GM12878 (cell line): ENCODE measurements at regions of chr10 and their contacts with region 1.

Region 1: GRCh38 chr10:60646966-60647796 is 131.1 kb upstream of the CDK1 start:
- DNase-seq: peak; percentile 17
- ATAC-seq: peak; percentile 78
- H3K4me3 ChIP-seq: no peak overlapping the region
- H3K27ac ChIP-seq: no peak overlapping the region
- H3K4me1 ChIP-seq: no peaks in the 10 kb centered on the region
- H3K27me3 ChIP-seq: no peaks in the 10 kb centered on the region
- CTCF ChIP-seq: peak; percentile 59 to 72 (median 59)
- EP300 ChIP-seq: no peak
- POLR2A ChIP-seq: no peak
- RAD21 ChIP-seq: peak; percentile 77

Region 2: DNA sequence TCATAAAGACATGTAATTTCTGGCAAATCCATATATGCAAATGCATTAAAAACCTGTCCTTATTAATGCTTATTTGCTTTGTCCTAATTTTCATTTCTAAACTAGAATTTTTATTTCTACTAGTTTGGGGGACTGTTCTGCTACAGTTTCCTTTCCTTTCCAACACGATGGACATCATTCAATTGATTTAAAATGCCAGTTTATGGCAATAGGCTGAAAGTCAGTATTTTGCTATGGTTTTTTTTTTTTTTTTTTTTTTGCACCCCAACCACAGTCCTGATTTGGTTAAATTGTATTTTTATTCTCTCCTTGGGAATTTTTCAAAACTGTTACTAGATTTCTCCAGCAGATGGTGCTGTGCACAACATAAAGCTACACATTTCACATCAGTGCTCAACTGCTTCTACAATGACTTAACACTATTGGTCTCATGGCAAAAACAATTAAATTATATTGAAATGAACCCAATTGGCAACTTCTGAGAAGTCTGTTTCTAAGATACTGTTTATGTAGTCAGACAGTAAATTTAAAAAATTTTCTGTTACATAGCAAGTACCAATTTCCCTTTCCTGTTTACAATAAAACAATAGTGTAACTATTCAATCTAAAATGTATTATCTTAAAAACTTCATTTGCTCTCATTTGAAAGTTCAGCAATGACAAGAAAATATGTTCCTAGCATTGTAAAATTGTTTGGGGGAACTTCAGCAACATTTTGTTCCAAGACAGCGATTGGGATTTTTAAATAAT is 547.0 kb before region 1 on chr10:
- CTCF ChIA-PET with region 1: interaction called, 5 read pairs
- POLR2A ChIA-PET with region 1: no interaction called
- RAD21 ChIA-PET with region 1: no interaction called
- SMC1A ChIA-PET with region 1: interaction called, 6 read pairs
- in situ Hi-C with region 1: loop called (anchors 5 kb)
- intact Hi-C with region 1: loop called (anchors 2 kb)
- DNase-seq: no peak
- ATAC-seq: peak; percentile 73
- H3K4me3 ChIP-seq: no peak overlapping the region
- H3K27ac ChIP-seq: no peak overlapping the region
- H3K4me1 ChIP-seq: peaks cover 9% of the 10 kb centered on the region
- H3K27me3 ChIP-seq: no peaks in the 10 kb centered on the region
- CTCF ChIP-seq: peak; percentile 51 to 55 (median 54); a peak in 5 of 6 replicates
- EP300 ChIP-seq: no peak
- POLR2A ChIP-seq: no peak
- RAD21 ChIP-seq: peak; percentile 66

Region 3: GRCh38 chr10:60444494-60445064 is 202.6 kb before region 1 on chr10:
- CTCF ChIA-PET with region 1: interaction called, 32 read pairs
- POLR2A ChIA-PET with region 1: no interaction called
- RAD21 ChIA-PET with region 1: interaction called, 8 read pairs
- SMC1A ChIA-PET with region 1: interaction called, 8 read pairs
- in situ Hi-C with region 1: loop called (anchors 5 kb)
- intact Hi-C with region 1: loop called (anchors 1 kb)
- DNase-seq: no peak
- ATAC-seq: no peak
- H3K4me3 ChIP-seq: no peak overlapping the region
- H3K27ac ChIP-seq: no peak overlapping the region
- H3K4me1 ChIP-seq: no peaks in the 10 kb centered on the region
- H3K27me3 ChIP-seq: no peaks in the 10 kb centered on the region
- CTCF ChIP-seq: no peak; a peak in 1 of 6 replicates
- EP300 ChIP-seq: no peak
- POLR2A ChIP-seq: no peak
- RAD21 ChIP-seq: peak; percentile 30; the same call in 1 of the 2 replicates

Region 4: DNA sequence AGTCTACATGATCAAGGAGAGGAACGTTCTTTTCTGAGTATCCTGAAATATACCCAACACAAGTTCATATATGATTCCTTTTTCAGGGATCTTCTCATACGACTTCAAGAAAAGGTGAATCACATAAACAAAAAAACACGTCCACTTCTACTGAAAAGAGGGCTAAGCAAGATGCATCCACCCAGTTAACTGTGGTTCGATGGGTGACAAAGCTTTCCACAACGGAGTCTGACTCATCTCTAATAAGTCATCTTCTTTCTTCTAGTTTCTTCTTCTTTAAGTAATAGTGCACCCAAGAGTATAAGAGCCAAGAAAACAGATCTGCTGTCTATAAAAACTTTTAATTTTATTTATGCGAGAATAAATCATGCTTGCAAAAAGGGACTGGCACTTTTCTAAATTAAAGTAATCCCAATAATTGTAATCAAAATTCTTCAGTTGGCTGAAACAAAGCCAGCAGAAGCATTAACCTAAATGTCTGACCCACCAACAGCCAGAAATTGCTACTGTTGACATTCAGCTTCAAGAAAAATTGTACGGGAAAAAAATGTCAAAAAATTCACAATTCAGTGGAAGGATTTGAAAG is 110.6 kb before region 1 on chr10:
- CTCF ChIA-PET with region 1: no interaction called
- POLR2A ChIA-PET with region 1: no interaction called
- RAD21 ChIA-PET with region 1: no interaction called
- SMC1A ChIA-PET with region 1: no interaction called
- in situ Hi-C with region 1: no loop called
- intact Hi-C with region 1: no loop called
- DNase-seq: no peak
- ATAC-seq: peak; percentile 55; the same call in 2 of the 3 replicates
- H3K4me3 ChIP-seq: no peak overlapping the region
- H3K27ac ChIP-seq: no peak overlapping the region
- H3K4me1 ChIP-seq: no peaks in the 10 kb centered on the region
- H3K27me3 ChIP-seq: 0 out of 4 replicates have a peak, but pooled peaks cover 0 to 2% of the 10 kb centered on the region in 2 experiments
- CTCF ChIP-seq: no peak
- EP300 ChIP-seq: no peak
- POLR2A ChIP-seq: no peak
- RAD21 ChIP-seq: no peak

Region 5: DNA sequence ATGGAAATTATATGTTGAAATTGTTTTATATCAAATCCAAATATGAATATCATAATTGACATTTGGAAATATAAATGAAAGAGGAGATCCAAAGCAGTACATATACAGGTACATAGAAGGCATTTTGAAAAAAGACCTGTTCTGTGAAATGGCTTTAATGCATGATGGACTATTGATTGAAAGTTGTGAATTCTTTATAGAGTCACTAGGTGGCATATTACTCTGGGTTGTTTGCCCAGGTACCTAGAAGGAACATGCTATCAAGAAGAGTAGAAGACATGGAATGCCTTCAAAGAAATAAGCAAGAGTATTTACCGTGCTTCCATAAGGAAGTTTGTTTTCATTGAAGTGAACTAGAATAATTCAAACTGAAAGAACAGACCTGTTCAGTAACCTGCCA is 97.5 kb before region 1 on chr10:
- CTCF ChIA-PET with region 1: no interaction called
- POLR2A ChIA-PET with region 1: no interaction called
- RAD21 ChIA-PET with region 1: interaction called, 5 read pairs
- SMC1A ChIA-PET with region 1: interaction called, 3 read pairs
- in situ Hi-C with region 1: no loop called
- intact Hi-C with region 1: loop called (anchors 2 kb)
- DNase-seq: no peak
- ATAC-seq: peak; percentile 64
- H3K4me3 ChIP-seq: no peak overlapping the region
- H3K27ac ChIP-seq: no peak overlapping the region
- H3K4me1 ChIP-seq: no peaks in the 10 kb centered on the region
- H3K27me3 ChIP-seq: no peaks in the 10 kb centered on the region
- CTCF ChIP-seq: peak; percentile 18 to 32 (median 25); a peak in 2 of 6 replicates
- EP300 ChIP-seq: no peak
- POLR2A ChIP-seq: no peak
- RAD21 ChIP-seq: 0 out of 2 replicates have a peak, but pooled peaks have one; percentile 19

Region 6: DNA sequence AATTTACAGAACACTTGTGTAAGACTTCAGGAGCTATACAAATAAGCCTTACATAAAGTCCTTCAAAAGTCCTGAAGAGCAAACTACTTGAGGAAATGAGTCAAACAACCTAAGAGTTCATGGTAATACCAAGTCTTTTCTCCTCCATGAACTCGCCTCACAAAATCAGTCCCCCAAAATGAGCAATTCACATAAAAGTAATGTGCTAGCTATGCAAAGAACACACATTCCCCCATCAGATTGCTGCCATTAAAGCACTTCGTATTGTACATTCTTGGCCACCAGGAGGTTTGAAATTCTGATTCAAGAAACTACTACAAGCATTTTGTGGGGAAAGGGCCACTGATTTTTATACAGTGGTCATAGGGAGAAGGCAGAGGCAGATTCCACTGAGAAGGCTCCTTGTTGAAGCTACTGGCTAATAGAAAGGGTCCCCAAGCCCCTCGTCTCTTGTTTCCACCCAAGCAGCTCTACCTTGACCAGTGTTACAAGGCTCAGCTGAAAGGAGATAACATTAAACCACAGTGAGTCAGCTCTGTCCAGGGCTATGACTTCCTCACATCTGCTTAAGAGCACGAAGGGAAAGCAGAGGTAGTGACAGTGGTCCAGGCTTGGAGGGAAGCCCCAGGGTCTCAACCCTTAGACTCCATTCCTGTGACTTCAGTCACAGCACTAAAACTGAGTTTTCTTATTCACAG is 15.9 kb after region 1 on chr10:
- CTCF ChIA-PET with region 1: interaction called, 3 read pairs
- POLR2A ChIA-PET with region 1: no interaction called
- RAD21 ChIA-PET with region 1: interaction called, 3 read pairs
- SMC1A ChIA-PET with region 1: interaction called, 11 read pairs
- in situ Hi-C with region 1: no loop called
- intact Hi-C with region 1: no loop called
- DNase-seq: no peak
- ATAC-seq: peak; percentile 27; the same call in 1 of the 3 replicates
- H3K4me3 ChIP-seq: no peak overlapping the region
- H3K27ac ChIP-seq: no peak overlapping the region
- H3K4me1 ChIP-seq: no peaks in the 10 kb centered on the region
- H3K27me3 ChIP-seq: no peaks in the 10 kb centered on the region; a peak in 1 of 4 replicates
- CTCF ChIP-seq: no peak
- EP300 ChIP-seq: no peak
- POLR2A ChIP-seq: no peak
- RAD21 ChIP-seq: no peak

Region 7: DNA sequence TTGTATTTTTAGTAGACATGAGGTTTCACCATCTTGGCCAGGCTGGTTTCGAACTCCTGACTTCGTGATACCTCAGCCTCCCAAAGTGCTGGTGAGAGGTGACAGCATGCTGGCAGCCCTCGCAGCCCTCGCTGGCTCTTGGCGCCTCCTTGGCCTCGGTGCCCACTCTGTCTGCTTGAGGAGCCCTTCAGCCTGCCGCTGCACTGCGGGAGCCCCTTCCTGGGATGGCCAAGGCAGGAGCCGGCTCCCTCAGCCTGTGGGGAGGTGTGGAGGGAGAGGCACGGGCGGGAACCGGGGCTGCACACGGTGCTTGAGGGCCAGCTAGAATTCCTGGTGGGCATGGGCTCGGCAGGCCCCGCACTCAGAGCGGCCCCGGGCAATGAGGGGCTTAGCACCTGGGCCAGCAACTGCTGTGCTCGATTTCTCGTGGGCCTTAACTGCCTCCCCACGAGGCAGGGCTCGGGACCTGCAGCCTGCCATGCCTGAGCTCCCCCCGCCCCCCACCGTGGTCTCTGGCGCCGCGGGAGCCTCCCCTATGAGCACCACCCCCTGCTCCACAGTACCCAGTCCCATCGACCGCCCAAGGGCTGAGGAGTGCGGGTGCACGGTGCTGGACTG is 393.3 kb after region 1 on chr10:
- CTCF ChIA-PET with region 1: no interaction called
- POLR2A ChIA-PET with region 1: no interaction called
- RAD21 ChIA-PET with region 1: no interaction called
- SMC1A ChIA-PET with region 1: no interaction called
- in situ Hi-C with region 1: no loop called
- intact Hi-C with region 1: no loop called
- DNase-seq: no peak
- ATAC-seq: no peak
- H3K4me3 ChIP-seq: no peak overlapping the region
- H3K27ac ChIP-seq: no peak overlapping the region
- H3K4me1 ChIP-seq: no peaks in the 10 kb centered on the region
- H3K27me3 ChIP-seq: no peaks in the 10 kb centered on the region
- CTCF ChIP-seq: no peak
- EP300 ChIP-seq: no peak
- POLR2A ChIP-seq: no peak
- RAD21 ChIP-seq: no peak